Dendritic cell treated with granulocyte-macrophage colony-stimulating factor and Interleukin-4, amounts not matched to agents 40 ng/mL and 50 ng/mL, for 4 days (primary cell): ENCODE measurements at regions of chr11 and their contacts with region 1.

Region 1: GRCh38 chr11:36265793-36266628 is 23.2 kb downstream of the COMMD9 start:
- H3K4me3 Mint-ChIP-seq: no peak overlapping the region
- H3K27ac Mint-ChIP-seq: no peak overlapping the region
- H3K4me1 Mint-ChIP-seq: no peaks in the 10 kb centered on the region
- H3K27me3 Mint-ChIP-seq: peaks cover 19% of the 10 kb centered on the region

Region 2: GRCh38 chr11:35485656-35486322 is 780.2 kb before region 1 on chr11:
- intact Hi-C with region 1: loop called (anchors 5 kb)
- H3K4me3 Mint-ChIP-seq: no peak overlapping the region
- H3K27ac Mint-ChIP-seq: no peak overlapping the region
- H3K4me1 Mint-ChIP-seq: no peaks in the 10 kb centered on the region
- H3K27me3 Mint-ChIP-seq: peaks cover 43% of the 10 kb centered on the region

Region 3: GRCh38 chr11:35917676-35918075 is 348.3 kb before region 1 on chr11:
- intact Hi-C with region 1: no loop called
- H3K4me3 Mint-ChIP-seq: no peak overlapping the region
- H3K27ac Mint-ChIP-seq: no peak overlapping the region
- H3K4me1 Mint-ChIP-seq: peaks cover 9% of the 10 kb centered on the region
- H3K27me3 Mint-ChIP-seq: peaks cover 20% of the 10 kb centered on the region

Region 4: DNA sequence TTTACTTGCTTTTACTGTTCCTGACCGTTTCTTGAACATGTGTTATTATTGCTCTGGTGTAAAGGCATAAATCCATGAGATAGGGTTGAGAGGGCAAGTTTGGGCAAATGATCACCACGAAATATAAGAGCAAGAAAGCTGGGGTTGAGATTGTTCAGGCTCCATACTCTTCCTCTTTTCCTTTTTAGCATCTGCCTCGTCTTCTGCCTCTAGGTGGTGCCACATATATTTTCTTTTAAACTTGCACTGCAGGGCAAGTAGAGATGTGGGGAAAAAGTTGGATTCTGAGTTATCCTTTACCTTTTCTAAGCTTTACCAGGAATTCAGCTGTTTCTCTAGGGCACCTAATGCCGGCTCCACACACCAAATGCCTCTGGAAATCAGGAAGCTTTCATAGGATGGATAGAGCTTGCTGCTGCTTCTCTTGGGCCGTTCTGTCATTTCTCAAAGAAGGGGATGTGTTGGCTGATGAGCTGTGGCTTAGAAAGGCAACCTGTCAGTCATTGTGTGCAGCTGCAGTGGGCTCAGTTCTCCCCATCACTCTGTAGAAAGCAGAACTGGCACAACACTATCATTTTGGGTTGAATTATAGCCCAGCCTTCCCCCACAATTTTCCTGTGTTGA is 223.9 kb before region 1 on chr11:
- intact Hi-C with region 1: loop called (anchors 2 kb)
- H3K4me3 Mint-ChIP-seq: no peak overlapping the region
- H3K27ac Mint-ChIP-seq: no peak overlapping the region
- H3K4me1 Mint-ChIP-seq: no peaks in the 10 kb centered on the region
- H3K27me3 Mint-ChIP-seq: no peaks in the 10 kb centered on the region